HAP-1 (cell line): ENCODE measurements at regions of chr3 and their contacts with region 1.

Region 1: DNA sequence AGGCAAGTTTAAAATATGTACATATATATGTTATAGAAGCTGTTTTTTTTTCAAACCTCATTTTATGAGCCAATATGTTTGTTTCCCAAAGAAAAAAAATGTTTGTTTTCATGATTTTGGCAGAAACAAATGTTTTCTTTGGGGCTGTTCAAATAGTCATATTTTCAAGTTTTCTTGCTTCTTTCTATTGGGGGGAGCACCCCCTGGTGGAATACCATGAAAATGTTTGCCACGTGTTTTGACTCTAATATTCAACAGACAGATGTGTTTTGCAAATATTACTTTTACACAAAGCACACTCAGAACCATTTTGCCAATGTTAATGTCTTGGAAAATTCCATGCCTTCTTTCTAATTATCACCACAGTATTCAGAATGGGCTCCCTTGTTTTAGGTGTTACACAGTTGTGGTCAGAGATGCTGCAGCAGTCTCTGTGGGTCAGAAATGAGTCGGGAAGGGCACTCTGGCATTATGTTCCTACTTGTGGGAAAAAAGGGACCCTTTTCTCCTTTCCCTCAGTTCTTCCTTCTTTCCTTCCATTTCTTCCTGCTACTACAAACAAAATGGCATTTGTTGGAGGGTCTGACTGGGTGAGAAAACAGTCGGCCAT is 817.0 kb downstream of the TUSC7 start:
- DNase-seq: peak; percentile 27 to 62
- H3K4me3 ChIP-seq: no peak overlapping the region
- H3K4me1 ChIP-seq: no peaks in the 10 kb centered on the region
- H3K27me3 ChIP-seq: peaks cover under 1% of the 10 kb centered on the region; the same call in 1 of the 2 replicates

Region 2: DNA sequence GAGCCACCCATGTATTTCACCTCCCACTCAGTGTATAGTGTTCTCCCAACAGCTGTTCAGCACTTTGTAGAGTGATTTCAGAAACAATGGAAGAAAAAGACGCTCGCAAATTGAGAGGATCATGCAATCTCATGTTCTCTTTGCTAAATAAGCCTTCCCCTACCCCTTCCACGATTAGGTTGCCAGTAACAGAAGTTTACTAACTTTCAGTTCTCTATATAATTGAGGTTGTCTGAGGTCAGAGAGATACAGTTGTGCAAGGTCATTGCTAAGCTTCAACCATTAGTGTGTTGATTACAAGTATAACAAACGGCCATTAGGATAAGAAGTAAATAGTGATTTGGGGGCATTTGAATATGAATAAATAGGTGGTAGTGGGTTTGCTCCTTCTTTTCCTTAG is 717.4 kb before region 1 on chr3:
- in situ Hi-C with region 1: no loop called
- DNase-seq: peak in 1 of 2 experiments; percentile 5
- H3K4me3 ChIP-seq: no peak overlapping the region
- H3K4me1 ChIP-seq: peaks cover 2% of the 10 kb centered on the region
- H3K27me3 ChIP-seq: no peaks in the 10 kb centered on the region

Region 3: DNA sequence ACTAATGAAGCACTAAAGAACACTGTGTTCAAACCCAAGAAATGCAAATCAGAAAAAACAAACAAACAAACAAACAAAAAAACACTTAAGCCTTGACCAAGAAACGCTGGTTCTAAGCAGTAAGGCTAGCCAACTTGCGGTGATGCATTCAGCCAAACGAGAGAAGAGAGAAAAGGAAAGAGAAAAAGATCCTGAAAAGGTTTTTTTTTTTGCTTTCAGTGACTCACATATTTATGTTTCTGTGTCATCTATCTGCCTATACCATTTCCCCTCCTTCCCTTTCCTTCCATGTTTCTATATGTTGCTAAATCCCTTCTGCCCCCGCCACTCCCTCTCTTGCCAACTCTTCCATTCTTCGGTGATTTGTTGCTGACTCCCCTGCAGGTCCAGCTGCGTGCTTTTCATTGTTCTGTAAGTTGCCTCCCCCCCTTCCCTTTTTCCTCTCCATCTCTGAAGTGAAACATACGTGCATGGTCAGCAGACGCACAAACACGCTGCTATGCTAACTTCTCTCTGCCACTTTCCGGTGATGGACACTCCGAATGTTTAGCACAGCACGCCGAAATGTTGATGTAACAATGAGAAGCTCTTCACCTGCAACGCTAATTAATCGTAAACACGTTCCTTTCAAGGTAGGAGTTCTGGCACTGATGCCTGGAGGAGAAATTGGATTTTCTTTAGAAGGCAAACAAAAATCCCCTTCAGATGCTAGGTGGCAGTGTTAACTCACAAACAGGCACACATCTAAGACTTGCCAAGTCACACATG is 662.6 kb before region 1 on chr3:
- in situ Hi-C with region 1: loop called (anchors 25 kb)
- DNase-seq: peak; percentile 54 to 77
- H3K4me3 ChIP-seq: peak overlapping the region; percentile 25
- H3K4me1 ChIP-seq: peaks cover 11% of the 10 kb centered on the region
- H3K27me3 ChIP-seq: no peaks in the 10 kb centered on the region

Region 4: DNA sequence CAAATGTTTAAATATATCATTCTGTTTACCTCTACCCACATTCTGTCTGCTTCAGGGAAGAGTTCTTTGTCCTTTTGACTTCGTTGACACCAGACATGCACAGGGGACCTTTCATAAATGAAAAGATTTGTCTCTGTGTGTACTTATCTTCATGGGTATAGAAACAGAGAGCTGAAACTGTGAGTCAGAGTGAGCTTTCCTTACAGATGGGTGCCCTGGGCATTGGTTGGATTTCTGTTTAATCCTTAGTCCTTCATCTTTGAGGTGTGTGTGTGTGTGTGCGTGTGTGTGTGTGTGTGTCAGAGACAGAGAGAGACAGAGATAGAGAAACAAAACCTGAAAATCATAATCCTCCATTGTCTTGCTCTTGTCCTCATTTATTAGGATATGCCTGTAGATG is 299.6 kb before region 1 on chr3:
- in situ Hi-C with region 1: no loop called
- DNase-seq: no peak
- H3K4me3 ChIP-seq: no peak overlapping the region
- H3K4me1 ChIP-seq: no peaks in the 10 kb centered on the region
- H3K27me3 ChIP-seq: no peaks in the 10 kb centered on the region